MCF 10A (cell line): ENCODE measurements at regions of chr16 and their contacts with region 1.

Region 1: GRCh38 chr16:81314603-81315270 is at the start of gene GAN:
- DNase-seq: peak; percentile 95
- H3K4me3 Mint-ChIP-seq: peak within 1 kb of the TSS; percentile 93
- H3K27ac Mint-ChIP-seq: peak within 1 kb of the TSS; percentile 74
- H3K4me1 Mint-ChIP-seq: peaks cover 22% of the 10 kb centered on the region
- H3K27me3 Mint-ChIP-seq: no peaks in the 10 kb centered on the region
- CTCF ChIP-seq: no peak
- total RNA-seq, gene GAN: 12.4 and 17.2 TPM in 2 replicates

Region 2: DNA sequence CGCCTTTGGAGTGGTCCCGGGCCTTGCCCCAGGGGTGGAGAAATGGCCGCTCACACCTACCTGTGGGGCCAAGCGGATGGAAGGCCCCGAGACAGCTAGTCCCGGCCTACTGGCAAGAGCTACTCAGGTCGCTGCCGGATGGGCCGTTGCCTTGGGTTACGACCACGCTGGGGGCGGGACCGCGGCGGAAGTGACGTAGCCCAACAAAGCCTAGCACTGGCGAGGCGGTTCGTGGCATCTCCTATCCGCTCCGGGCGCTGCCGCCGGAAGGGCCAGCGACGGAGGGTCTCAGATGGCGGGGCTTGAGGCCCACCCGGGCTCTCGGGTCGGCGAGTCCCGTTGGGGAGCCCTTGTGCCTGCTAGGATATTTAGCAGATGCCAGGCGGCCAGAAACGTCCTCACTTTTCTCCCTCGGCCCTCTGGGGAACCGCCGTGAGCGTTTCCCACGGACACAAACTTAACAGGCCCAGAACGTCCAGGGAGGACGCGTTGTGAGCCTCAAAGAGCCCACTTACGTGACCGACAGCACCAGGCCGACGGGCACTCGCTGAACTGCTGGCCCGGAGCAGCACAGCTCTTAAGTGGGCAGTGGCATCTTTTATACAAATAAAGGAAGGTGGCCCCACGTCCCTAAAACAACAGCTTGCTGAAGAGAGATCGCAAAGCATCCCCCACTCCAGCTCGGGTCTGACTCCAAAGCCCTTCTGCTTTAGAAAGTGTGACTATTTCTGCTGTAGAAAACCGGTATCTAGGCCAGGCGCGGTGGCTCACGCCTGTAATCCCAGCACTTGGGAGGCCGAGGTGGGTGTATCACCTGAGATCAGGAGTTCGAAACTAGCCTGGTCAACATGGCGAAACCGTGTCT is 237.4 kb before region 1 on chr16 and contains the start of gene C16orf46:
- CTCF ChIA-PET with region 1: interaction called, 4 read pairs
- POLR2A ChIA-PET with region 1: interaction called, 4 read pairs
- intact Hi-C with region 1: loop called (anchors 2 kb)
- DNase-seq: peak; percentile 92
- H3K4me3 Mint-ChIP-seq: no peak within 1 kb of the TSS
- H3K27ac Mint-ChIP-seq: no peak within 1 kb of the TSS
- H3K4me1 Mint-ChIP-seq: no peaks in the 10 kb centered on the region
- H3K27me3 Mint-ChIP-seq: no peaks in the 10 kb centered on the region
- CTCF ChIP-seq: no peak
- total RNA-seq, gene C16orf46: 0.66 and 3.8 TPM in 2 replicates

Region 3: DNA sequence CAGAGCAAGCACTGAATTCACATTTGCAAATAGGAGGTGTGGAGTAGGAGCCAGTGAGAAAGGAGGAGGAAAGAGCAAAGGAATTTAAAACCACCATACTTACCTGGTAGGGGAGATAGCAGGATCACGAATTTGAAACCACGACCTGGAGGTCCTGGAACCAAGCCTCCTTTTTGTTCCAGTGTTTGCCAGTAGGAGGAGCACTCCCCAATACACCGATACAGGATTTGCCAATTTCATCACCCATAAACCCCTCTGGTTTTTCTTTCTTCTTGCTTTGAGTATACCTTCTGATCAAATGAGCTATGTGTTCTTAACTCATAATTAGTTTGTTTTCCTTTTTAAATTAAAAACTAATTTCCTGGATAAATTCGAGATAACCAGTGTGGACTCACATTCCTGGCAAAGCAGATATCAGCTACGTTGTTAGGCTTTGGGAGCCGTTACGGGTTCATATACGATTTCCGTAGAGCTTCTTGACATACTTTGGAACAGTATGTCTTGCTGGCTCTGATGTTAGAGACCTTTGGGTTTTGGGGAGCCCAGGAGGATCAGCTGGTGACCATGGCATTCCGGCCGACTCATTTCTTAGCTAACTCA is 53.6 kb before region 1 on chr16:
- CTCF ChIA-PET with region 1: interaction called, 18 read pairs
- POLR2A ChIA-PET with region 1: interaction called, 36 read pairs
- intact Hi-C with region 1: loop called (anchors 2 kb)
- DNase-seq: peak; percentile 34
- H3K4me3 Mint-ChIP-seq: no peak overlapping the region
- H3K27ac Mint-ChIP-seq: no peak overlapping the region
- H3K4me1 Mint-ChIP-seq: peaks cover 13% of the 10 kb centered on the region
- H3K27me3 Mint-ChIP-seq: no peaks in the 10 kb centered on the region
- CTCF ChIP-seq: peak; percentile 61

Region 4: GRCh38 chr16:81293909-81294823 is 20.6 kb before region 1 on chr16:
- CTCF ChIA-PET with region 1: interaction called, 5 read pairs
- POLR2A ChIA-PET with region 1: interaction called, 17 read pairs
- intact Hi-C with region 1: no loop called
- DNase-seq: peak; percentile 37
- H3K4me3 Mint-ChIP-seq: peak overlapping the region; percentile 43
- H3K27ac Mint-ChIP-seq: peak overlapping the region; percentile 92
- H3K4me1 Mint-ChIP-seq: peaks cover 22% of the 10 kb centered on the region
- H3K27me3 Mint-ChIP-seq: no peaks in the 10 kb centered on the region
- CTCF ChIP-seq: no peak

Region 5: GRCh38 chr16:81324808-81325207 is 10.1 kb after region 1 on chr16:
- CTCF ChIA-PET with region 1: interaction called, 6 read pairs
- POLR2A ChIA-PET with region 1: interaction called, 35 read pairs
- intact Hi-C with region 1: no loop called
- DNase-seq: peak; percentile 44
- H3K4me3 Mint-ChIP-seq: no peak overlapping the region
- H3K27ac Mint-ChIP-seq: peak overlapping the region; percentile 52
- H3K4me1 Mint-ChIP-seq: peaks cover 49% of the 10 kb centered on the region
- H3K27me3 Mint-ChIP-seq: no peaks in the 10 kb centered on the region
- CTCF ChIP-seq: no peak

Region 6: DNA sequence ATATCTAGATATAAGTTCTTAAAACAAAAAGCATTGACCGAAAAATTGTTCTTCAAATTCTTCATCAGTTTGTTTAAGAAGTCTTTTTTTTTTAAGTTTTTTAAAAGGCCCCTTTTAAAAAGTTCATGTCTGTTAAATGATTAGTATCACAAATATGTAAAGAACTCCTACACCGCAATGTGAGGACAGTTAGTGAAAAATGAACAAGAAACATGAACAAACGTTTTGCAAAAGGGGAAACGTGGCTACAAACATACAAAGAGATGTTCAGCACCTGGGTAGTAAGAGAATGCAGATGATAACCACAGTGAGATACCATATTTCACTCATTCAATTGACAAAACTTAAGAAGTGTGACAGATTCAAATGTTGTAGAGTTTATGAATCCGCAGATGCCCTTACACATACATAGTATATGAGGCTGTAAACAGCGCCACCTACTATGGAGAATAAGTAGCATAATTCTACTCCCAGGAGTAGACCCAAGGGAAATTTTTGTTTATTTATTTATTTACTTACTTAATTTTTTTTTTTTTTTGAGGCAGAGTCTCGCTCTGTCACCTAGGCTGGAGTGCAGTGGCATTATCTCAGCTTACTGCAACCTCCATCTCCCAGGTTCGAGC is 35.4 kb after region 1 on chr16:
- CTCF ChIA-PET with region 1: no interaction called
- POLR2A ChIA-PET with region 1: interaction called, 4 read pairs
- intact Hi-C with region 1: loop called (anchors 5 kb)
- DNase-seq: peak; percentile 14
- H3K4me3 Mint-ChIP-seq: no peak overlapping the region
- H3K27ac Mint-ChIP-seq: no peak overlapping the region
- H3K4me1 Mint-ChIP-seq: no peaks in the 10 kb centered on the region
- H3K27me3 Mint-ChIP-seq: no peaks in the 10 kb centered on the region
- CTCF ChIP-seq: no peak